ENCODE measurements at regions of chr12 and their contacts with region 1.

Region 1: DNA sequence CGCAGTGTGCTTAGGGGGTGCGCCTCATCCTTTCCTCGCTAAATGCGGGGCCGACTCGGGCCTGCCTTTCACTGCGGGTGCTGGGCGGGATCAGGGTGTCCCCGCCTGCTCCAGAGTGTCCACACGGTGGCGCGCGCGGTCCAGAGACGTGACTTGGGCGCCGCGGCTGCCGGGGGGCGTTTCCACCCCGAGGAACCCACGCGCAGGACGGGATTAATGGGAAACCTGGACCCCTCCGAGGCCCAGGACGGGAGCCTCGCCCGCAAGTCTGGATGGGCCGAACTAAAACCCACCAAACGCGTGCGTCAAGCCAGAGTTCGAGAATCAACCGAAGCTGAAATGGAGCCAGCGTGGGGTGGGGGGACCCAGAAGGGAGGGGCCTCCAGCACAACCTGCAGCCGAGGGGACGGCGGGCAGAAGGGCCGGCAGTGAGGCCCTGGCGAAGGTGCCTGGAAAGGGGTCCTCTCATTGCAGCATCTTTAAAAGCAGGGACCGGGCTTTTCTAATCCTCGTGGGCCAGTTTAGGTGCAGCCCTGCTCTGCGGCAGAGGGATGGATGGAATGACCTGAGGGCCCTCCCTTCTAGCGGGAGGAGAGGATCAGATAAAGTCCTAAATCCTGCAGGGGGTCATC is 93.3 kb downstream of the NINJ2 start:
- DNase-seq: peak; percentile 91
- ATAC-seq: peak; percentile 97
- H3K4me3 Mint-ChIP-seq: peak overlapping the region; percentile 80
- H3K27ac Mint-ChIP-seq: peak overlapping the region; percentile 73
- H3K4me1 Mint-ChIP-seq: peaks cover 57% of the 10 kb centered on the region
- H3K27me3 Mint-ChIP-seq: no peaks in the 10 kb centered on the region

Region 2: GRCh38 chr12:779745-780734 is 210.1 kb after region 1 on chr12:
- CTCF ChIA-PET with region 1: interaction called, 12 read pairs
- POLR2A ChIA-PET with region 1: no interaction called
- DNase-seq: no peak
- ATAC-seq: no peak
- H3K4me3 Mint-ChIP-seq: peak overlapping the region; percentile 50
- H3K27ac Mint-ChIP-seq: no peak overlapping the region
- H3K4me1 Mint-ChIP-seq: peaks cover 53% of the 10 kb centered on the region
- H3K27me3 Mint-ChIP-seq: no peaks in the 10 kb centered on the region

Region 3: GRCh38 chr12:949453-950191 is 379.7 kb after region 1 on chr12 and contains the start of gene RAD52:
- CTCF ChIA-PET with region 1: interaction called, 11 read pairs
- POLR2A ChIA-PET with region 1: no interaction called
- DNase-seq: peak; percentile 98
- ATAC-seq: peak; percentile 89
- H3K4me3 Mint-ChIP-seq: peak within 1 kb of the TSS; percentile 91
- H3K27ac Mint-ChIP-seq: peak within 1 kb of the TSS; percentile 81
- H3K4me1 Mint-ChIP-seq: peaks cover 39% of the 10 kb centered on the region
- H3K27me3 Mint-ChIP-seq: peaks cover 4% of the 10 kb centered on the region
- total RNA-seq, gene RAD52: 19.3 to 20.9 TPM

Measured in activated CD8-positive, alpha-beta T cell treated with anti-CD3 and anti-CD28 coated beads, Interleukin-2, amount 10 ng/mL, durations not matched to agents 7 days and 5 days (primary cell).